ENCODE measurements at regions of chr4 and their contacts with region 1.

Region 1: DNA sequence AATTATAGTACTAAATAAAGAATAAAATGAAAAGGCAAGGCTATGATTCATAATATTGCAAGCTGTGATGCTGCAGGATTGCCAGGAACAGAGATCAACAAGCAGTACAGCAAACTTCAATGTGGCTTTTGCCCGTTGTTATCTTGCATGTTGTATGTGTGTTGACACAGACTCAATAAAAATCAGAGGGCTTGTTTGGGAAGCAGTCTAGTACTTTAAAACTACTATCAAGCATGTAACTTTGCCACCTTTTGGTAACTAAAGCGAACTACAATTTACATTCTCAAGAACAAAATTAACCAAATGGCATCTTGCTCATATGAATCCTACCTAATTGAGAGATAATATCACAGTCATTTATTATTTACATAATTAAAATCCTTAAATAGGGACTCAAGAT is 79.8 kb upstream of the GPM6A start:
- DNase-seq: no peak
- H3K4me3 ChIP-seq: no peak overlapping the region
- H3K27ac ChIP-seq: no peak overlapping the region
- H3K4me1 ChIP-seq: peaks cover 0 to 3% (median 0%) of the 10 kb centered on the region in 6 donors
- H3K27me3 ChIP-seq: no peaks in the 10 kb centered on the region
- CTCF ChIP-seq: peak in 5 of 11 experiments; percentile 7 to 40 (median 26)
- POLR2A ChIP-seq: no peak

Region 2: DNA sequence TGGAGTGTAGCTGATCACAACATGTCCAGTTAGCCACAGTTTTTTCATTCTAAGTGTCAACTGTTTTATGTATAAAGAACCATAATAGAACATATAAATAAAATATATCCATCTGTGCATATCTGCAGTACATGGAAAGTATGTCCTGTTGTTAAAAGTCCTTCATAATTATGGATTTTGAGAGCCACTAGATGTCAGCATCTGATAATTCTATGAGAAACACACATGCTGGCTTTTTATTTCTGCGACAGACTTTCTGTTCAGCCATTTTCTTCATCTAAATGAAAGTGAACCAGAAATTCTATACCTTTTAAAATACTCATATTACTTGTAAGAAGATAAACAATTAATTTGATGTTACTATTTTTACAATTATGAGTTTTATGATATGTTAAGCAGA is 331.2 kb before region 1 on chr4:
- intact Hi-C with region 1: loop called (anchors 5 kb)
- DNase-seq: no peak
- H3K4me3 ChIP-seq: no peak overlapping the region
- H3K27ac ChIP-seq: no peak overlapping the region
- H3K4me1 ChIP-seq: no peaks in the 10 kb centered on the region
- H3K27me3 ChIP-seq: no peaks in the 10 kb centered on the region
- CTCF ChIP-seq: peak in 6 of 11 experiments; percentile 9 to 32 (median 20)
- POLR2A ChIP-seq: no peak

Region 3: DNA sequence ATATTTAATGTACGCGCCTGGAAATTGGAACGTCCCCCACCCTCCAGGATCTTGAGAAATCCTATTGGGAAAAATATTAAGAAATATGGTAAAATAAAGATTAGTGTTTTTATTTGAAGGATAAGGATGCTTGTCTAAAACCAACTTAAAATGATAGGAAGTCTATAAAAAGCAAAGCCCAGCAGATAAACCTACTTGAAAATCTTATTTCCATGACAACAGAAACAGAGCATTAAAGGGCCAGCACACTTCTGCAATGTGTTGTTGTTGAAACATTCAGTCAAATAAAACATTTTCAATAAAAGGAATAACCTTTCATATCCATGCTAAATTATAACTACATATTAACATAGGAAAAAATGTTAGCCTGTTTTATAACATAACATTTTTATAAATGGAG is 50.5 kb before region 1 on chr4:
- intact Hi-C with region 1: no loop called
- DNase-seq: no peak
- H3K4me3 ChIP-seq: no peak overlapping the region
- H3K27ac ChIP-seq: no peak overlapping the region
- H3K4me1 ChIP-seq: no peaks in the 10 kb centered on the region
- H3K27me3 ChIP-seq: no peaks in the 10 kb centered on the region
- CTCF ChIP-seq: no peak
- POLR2A ChIP-seq: no peak

Region 4: DNA sequence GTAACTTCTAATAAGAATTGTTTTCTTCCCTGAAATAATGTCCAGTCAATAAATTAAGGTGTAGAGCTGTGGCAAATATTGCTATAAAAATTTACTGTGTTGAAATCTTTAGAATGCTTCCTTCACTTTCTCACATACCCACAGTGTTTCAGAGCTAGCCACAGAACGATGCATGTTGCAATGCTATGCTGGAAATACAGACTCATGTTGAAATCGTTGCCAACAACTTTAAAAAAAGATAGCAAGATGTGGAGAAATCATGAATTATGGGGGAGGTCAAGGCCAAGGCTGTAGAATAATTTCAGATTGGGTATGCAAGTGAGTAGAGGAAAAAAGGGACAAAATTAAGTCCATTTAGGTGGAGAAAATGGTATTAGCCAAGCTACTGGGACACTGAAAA is 696.1 kb after region 1 on chr4:
- intact Hi-C with region 1: no loop called
- DNase-seq: no peak
- H3K4me3 ChIP-seq: no peak overlapping the region
- H3K27ac ChIP-seq: no peak overlapping the region
- H3K4me1 ChIP-seq: no peaks in the 10 kb centered on the region
- H3K27me3 ChIP-seq: no peaks in the 10 kb centered on the region
- CTCF ChIP-seq: no peak
- POLR2A ChIP-seq: no peak